HepG2 (cell line): ENCODE measurements at regions of chr18 and their contacts with region 1.

Region 1: GRCh38 chr18:56060967-56061541 is 473.1 kb upstream of the TCF4 start:
- DNase-seq: no peak
- ATAC-seq: no peak
- H3K4me3 ChIP-seq: no peak overlapping the region
- H3K27ac ChIP-seq: no peak overlapping the region
- H3K4me1 ChIP-seq: no peaks in the 10 kb centered on the region
- H3K27me3 ChIP-seq: no peaks in the 10 kb centered on the region; a peak in 1 of 5 replicates
- CTCF ChIP-seq: no peak
- EP300 ChIP-seq: no peak
- POLR2A ChIP-seq: no peak
- RAD21 ChIP-seq: no peak

Region 2: GRCh38 chr18:56043671-56044070 is 17.4 kb before region 1 on chr18:
- CTCF ChIA-PET with region 1: no interaction called
- POLR2A ChIA-PET with region 1: no interaction called
- in situ Hi-C with region 1: no loop called
- intact Hi-C with region 1: loop called (anchors 1 kb)
- DNase-seq: no peak
- ATAC-seq: no peak
- H3K4me3 ChIP-seq: no peak overlapping the region
- H3K27ac ChIP-seq: no peak overlapping the region
- H3K4me1 ChIP-seq: no peaks in the 10 kb centered on the region
- H3K27me3 ChIP-seq: no peaks in the 10 kb centered on the region
- CTCF ChIP-seq: no peak
- EP300 ChIP-seq: no peak
- POLR2A ChIP-seq: no peak
- RAD21 ChIP-seq: no peak